ENCODE measurements at regions of chr16 and their contacts with region 1.

Region 1: DNA sequence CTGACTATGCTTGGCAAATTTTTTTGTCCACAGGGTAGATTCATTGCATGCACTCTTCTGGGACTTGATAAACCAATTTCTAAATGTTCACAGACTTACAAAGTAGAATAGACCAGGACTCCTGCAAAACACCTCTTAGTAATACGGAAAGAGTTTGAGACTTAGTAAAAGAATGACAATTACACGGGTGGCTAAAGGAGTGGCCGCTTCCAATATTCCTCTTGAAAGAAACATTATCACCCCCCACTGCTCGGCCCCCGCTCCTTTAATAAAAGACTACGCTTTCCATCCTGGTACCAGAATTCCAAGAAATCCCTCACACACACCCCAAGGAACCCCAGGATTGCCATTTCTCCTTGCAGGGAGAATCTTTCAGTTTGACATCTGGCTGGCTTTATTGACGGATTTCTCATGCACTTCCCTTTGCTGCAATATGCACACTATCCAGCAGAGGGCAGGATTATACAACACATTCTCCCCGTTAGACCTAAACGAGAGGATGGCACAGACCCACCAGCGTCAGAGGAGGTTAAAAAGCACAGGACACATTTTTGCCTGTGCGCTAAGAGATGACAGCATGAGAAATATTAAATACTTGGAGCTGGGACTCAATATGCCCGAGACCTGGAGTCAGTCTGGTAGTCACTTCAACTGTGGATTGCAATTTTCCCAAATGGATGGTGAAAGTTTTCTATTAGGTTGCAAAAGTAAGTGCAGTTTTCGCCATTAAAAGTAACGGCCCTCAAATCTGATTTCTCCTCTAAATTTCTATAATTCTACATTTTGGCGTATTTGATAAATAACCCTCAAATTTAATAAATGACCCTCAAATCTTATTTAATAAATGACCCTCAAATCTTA is 46.6 kb upstream of the NUDT7 start:
- DNase-seq: peak; percentile 77
- ATAC-seq: peak; percentile 55
- H3K4me3 Mint-ChIP-seq: no peak overlapping the region
- H3K27ac Mint-ChIP-seq: no peak overlapping the region
- H3K4me1 Mint-ChIP-seq: no peaks in the 10 kb centered on the region
- H3K27me3 Mint-ChIP-seq: peaks cover 11% of the 10 kb centered on the region

Region 2: DNA sequence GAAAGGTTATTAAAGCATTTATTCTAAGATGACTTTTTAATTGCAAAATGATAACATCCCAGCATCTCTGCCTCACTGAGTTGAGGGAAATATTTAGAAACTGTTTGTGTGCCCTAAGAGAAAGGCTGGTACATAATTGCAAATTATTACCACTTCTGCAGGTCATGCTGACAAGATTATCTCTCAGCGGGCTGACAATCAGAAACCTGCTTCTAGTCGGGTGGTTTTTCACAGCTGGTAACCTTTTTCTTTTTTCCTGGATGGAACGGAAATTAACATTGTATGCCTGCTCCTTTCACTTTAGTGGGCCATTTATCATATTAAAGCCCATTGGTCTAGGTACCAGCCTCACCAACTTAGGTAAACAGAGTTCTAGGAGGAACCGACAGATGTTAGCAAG is 29.7 kb after region 1 on chr16:
- CTCF ChIA-PET with region 1: no interaction called
- POLR2A ChIA-PET with region 1: no interaction called
- intact Hi-C with region 1: no loop called
- DNase-seq: no peak
- ATAC-seq: no peak
- H3K4me3 Mint-ChIP-seq: no peak overlapping the region
- H3K27ac Mint-ChIP-seq: no peak overlapping the region
- H3K4me1 Mint-ChIP-seq: no peaks in the 10 kb centered on the region
- H3K27me3 Mint-ChIP-seq: peaks cover 14% of the 10 kb centered on the region

Region 3: DNA sequence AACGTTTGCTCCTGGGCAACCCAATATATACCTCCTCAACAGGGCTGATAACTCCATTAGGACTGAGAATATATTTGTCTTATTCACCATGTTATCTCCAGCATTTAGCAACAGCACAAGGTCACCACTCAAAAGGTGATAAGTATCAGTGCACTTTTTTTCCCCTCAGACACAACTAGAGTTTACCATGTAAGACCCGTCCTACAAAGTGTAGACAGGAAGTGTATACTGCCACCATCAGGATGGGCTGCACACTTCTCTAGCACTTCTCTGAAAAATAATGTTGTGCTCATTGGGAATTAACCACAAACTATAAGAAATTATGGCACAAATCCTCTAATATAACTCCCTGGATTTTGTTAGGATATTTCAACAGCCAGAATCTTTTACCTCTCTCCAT is 107.0 kb after region 1 on chr16:
- CTCF ChIA-PET with region 1: interaction called, 3 read pairs
- POLR2A ChIA-PET with region 1: no interaction called
- intact Hi-C with region 1: loop called in 1 of 2 experiments (anchors 2 kb)
- DNase-seq: no peak
- ATAC-seq: peak; percentile 53
- H3K4me3 Mint-ChIP-seq: no peak overlapping the region
- H3K27ac Mint-ChIP-seq: no peak overlapping the region
- H3K4me1 Mint-ChIP-seq: no peaks in the 10 kb centered on the region
- H3K27me3 Mint-ChIP-seq: peaks cover 33% of the 10 kb centered on the region

Region 4: DNA sequence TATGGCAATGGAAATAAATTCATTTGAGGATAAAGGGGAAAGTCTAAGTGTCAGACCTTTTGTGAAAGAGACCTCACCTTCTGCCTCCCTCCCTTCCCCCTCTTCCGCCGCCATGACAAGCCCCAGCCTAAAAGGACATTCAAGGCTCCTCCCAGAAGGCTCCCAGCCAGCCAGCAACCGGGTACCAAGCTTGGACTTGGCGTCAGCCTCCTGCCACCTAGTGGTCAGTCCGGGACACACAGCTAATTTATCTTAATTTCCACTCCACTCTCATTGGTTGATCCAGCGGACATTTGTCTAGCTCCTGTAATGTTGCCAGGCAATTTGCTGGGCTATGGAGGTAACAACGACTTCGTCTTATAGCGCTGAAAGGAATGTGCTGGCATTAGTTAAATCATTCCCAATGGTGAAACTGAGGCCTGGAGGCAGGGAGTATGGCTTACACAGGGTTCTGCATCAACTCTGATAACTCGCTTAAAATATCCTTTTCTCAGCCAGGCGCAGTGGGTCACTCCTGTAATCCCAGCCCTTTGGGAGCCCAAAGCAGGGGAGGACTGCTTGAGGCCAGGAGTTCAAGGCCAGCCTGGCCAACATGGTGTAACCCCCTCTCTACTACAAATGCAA is 327.3 kb after region 1 on chr16:
- CTCF ChIA-PET with region 1: interaction called, 4 read pairs
- POLR2A ChIA-PET with region 1: no interaction called
- intact Hi-C with region 1: loop called (anchors 1 kb)
- DNase-seq: peak; percentile 90
- ATAC-seq: peak; percentile 99
- H3K4me3 Mint-ChIP-seq: no peak overlapping the region
- H3K27ac Mint-ChIP-seq: no peak overlapping the region
- H3K4me1 Mint-ChIP-seq: no peaks in the 10 kb centered on the region
- H3K27me3 Mint-ChIP-seq: peaks cover 16% of the 10 kb centered on the region